Mucosa of descending colon (tissue), 3 donors: ENCODE measurements at regions of chr12 and their contacts with region 1.

Region 1: GRCh38 chr12:56987551-56988053 is 18.7 kb downstream of the ZBTB39 start:
- DNase-seq: peak; percentile 80 to 83 (median 81)
- ATAC-seq: peak; percentile 89
- H3K4me3 ChIP-seq: no peak overlapping the region
- H3K4me1 ChIP-seq: no peaks in the 10 kb centered on the region
- CTCF ChIP-seq: peak; percentile 89

Region 2: GRCh38 chr12:56751712-56752598 is 235.6 kb before region 1 on chr12 and contains the start of gene PRIM1:
- intact Hi-C with region 1: loop called in 1 of 2 experiments (anchors 2 kb)
- DNase-seq: peak; percentile 88 to 90 (median 90)
- ATAC-seq: peak; percentile 96
- H3K4me3 ChIP-seq: peak within 1 kb of the TSS; percentile 51
- H3K4me1 ChIP-seq: no peaks in the 10 kb centered on the region
- CTCF ChIP-seq: no peak
- total RNA-seq, gene PRIM1: 6.3 to 11.5 (median 6.8) TPM

Region 3: DNA sequence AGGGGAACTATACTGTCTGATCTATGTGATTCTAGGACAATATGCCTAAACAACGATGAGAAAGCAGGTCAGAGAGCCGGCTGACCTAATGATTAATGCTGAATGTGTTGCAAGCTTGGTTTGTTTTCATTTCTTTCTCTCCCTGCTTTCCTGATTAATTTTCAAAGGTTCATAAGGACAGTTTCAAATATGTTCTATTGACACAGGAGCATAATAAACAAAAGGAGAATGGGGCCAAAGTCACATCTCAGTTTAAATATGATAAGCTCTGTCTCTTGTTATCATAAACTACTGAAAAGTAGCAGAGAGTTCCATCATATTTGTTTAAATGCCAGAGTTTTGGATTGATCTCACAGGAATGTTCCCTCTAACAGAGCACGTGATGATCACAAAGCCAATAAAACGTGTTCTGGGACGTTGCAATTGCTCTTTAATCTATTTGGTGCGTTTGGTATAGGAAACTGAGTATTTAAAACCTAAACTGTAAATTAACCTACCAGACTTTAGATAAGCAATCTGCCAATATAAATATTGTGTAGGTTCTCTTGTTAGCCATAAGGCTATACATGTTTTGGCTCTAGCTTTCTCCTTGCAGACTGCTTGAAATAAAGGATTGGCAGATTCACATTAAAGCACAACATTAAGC is 228.2 kb before region 1 on chr12:
- intact Hi-C with region 1: loop called (anchors 2 kb)
- DNase-seq: no peak
- ATAC-seq: no peak
- H3K4me3 ChIP-seq: no peak overlapping the region
- H3K4me1 ChIP-seq: no peaks in the 10 kb centered on the region
- CTCF ChIP-seq: no peak